ENCODE measurements at regions of chr4 and their contacts with region 1.

Region 1: DNA sequence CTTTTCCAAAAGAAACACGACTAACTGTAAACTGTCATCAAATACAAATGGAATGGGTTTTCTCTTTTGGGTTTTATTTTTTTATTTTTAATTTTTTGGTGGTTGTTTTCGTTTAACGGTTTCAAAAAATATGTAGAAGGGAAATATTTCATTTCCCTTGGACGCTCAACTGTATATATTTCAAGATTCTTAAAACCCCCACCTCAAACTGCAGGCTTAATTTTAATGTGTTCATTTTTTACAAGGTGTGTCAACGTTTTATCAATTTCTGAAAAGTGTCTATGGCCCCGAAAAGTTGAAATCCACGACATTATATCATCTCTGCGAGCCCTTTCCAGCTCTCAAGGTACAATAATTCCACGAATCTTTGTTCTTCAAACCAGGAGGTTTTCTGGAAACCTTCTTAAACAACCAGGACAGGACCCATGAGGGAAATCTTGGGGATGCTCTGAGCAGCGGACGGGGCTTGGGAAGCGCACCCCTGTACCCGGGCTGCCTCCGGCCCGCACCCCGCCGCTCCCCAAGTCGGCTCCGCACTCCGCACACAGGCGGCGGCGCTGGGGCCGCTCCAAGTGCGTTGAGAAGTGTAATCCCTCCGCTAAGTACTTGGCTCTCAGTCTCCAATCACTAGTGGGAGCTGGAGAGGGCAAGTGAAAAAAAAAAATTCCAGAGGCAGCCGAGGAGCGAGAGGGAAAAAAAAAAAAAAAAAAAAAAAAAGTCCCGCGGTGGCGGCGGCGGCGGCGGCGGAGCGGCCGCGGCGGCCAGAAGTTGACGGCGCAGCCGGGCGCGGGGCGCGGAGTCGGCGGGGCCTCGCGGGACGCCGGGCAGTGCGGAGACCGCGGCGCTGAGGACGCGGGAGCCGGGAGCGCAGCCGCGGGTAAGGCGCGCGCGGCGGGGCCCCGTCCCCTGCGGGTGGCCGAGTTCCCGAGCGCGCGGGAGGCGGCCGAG is at the start of gene BMPR1B:
- DNase-seq: peak; percentile 75
- H3K4me3 ChIP-seq: peak within 1 kb of the TSS; percentile 38 to 71 (median 58)
- H3K27ac ChIP-seq: no peak within 1 kb of the TSS
- H3K4me1 ChIP-seq: peaks cover 8% of the 10 kb centered on the region
- H3K27me3 ChIP-seq: no peaks in the 10 kb centered on the region
- CTCF ChIP-seq: peak in 1 of 2 donors; percentile 20
- POLR2A ChIP-seq: no peak
- total RNA-seq, gene BMPR1B: 1.4 and 2.1 TPM in 2 replicates

Region 2: GRCh38 chr4:94428884-94429557 is 328.4 kb before region 1 on chr4:
- CTCF ChIA-PET with region 1: no interaction called
- POLR2A ChIA-PET with region 1: no interaction called
- dilution Hi-C with region 1: no loop called
- intact Hi-C with region 1: no loop called
- DNase-seq: no peak
- H3K4me3 ChIP-seq: no peak overlapping the region
- H3K27ac ChIP-seq: no peak overlapping the region
- H3K4me1 ChIP-seq: no peaks in the 10 kb centered on the region
- H3K27me3 ChIP-seq: no peaks in the 10 kb centered on the region
- CTCF ChIP-seq: no peak
- POLR2A ChIP-seq: no peak

Region 3: GRCh38 chr4:94669672-94670664 is 87.5 kb before region 1 on chr4:
- CTCF ChIA-PET with region 1: no interaction called
- POLR2A ChIA-PET with region 1: no interaction called
- dilution Hi-C with region 1: no loop called
- intact Hi-C with region 1: loop called (anchors 5 kb)
- DNase-seq: peak; percentile 62
- H3K4me3 ChIP-seq: no peak overlapping the region
- H3K27ac ChIP-seq: no peak overlapping the region
- H3K4me1 ChIP-seq: peaks cover 11% of the 10 kb centered on the region
- H3K27me3 ChIP-seq: no peaks in the 10 kb centered on the region
- CTCF ChIP-seq: no peak
- POLR2A ChIP-seq: no peak

Region 4: DNA sequence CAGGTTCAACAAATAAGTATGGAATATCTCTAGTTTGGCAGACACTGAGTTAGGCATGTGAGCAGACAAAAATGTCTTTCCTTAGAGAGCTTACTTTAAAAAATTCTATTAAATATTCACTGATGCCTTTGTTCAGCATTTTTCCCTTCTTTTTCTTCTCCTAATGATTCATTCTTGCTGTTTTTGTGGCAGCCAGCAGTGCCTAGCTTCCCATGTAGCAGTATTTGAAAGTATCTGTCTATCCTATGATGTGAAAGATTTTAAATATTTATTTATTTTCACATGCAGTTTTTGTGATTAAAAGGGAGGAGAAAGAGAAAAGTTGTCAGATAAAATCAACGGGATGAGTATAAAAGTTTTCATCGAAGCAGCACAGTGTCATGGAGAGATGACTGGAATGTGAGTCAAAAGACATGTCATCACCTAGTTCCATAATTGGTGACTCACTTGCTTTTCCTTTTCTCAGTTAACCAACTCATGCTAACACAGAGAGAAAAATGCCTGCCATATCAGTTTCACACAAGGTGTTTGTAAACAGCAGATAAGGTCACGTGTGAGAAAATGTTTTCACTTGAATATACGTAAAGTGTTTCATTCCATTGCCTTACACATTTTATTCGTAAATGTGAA is 70.1 kb after region 1 on chr4:
- CTCF ChIA-PET with region 1: no interaction called
- POLR2A ChIA-PET with region 1: no interaction called
- dilution Hi-C with region 1: no loop called
- intact Hi-C with region 1: loop called (anchors 2 kb)
- DNase-seq: peak; percentile 90
- H3K4me3 ChIP-seq: peak overlapping the region in 1 of 3 experiments; percentile 23
- H3K27ac ChIP-seq: peak overlapping the region; percentile 61
- H3K4me1 ChIP-seq: peaks cover 23% of the 10 kb centered on the region
- H3K27me3 ChIP-seq: no peaks in the 10 kb centered on the region
- CTCF ChIP-seq: no peak
- POLR2A ChIP-seq: no peak

Region 5: DNA sequence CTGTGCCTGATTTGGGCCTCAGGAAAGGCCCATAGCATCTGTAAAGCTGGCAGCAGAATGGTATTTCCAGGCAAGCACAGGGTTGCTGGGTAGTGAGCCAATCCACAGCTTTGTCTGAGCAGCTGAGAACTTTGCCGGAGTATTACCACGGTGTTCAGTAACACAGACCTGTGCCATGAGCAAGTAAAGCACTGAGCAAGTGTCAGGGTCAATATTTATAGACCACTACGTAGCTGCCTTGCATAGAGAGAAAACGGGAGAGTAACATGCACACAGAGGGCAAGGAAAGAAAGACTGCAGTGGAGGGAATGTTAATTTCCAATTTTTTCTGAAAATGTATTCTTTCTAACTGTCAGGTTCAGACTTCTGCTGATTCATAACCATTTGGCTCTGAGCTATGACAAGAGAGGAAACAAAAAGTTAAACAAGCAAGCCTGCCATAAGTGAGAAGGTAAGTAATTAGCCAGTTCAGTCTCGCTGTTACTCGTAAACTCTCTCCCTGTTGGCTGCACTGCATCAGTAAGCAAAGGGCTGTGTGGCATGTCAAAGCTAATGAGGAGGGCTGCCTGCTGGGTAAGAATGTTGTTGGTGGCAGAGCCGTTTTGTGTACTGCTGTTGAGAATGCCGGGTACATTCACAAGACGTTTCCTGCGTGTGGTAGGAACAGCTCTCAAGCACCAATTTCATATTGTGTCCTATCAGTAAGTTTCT is 238.4 kb after region 1 on chr4:
- CTCF ChIA-PET with region 1: no interaction called
- POLR2A ChIA-PET with region 1: no interaction called
- dilution Hi-C with region 1: no loop called
- intact Hi-C with region 1: loop called (anchors 5 kb)
- DNase-seq: peak; percentile 67
- H3K4me3 ChIP-seq: no peak overlapping the region
- H3K27ac ChIP-seq: no peak overlapping the region
- H3K4me1 ChIP-seq: peaks cover 3% of the 10 kb centered on the region
- H3K27me3 ChIP-seq: no peaks in the 10 kb centered on the region
- CTCF ChIP-seq: no peak
- POLR2A ChIP-seq: no peak

Region 6: DNA sequence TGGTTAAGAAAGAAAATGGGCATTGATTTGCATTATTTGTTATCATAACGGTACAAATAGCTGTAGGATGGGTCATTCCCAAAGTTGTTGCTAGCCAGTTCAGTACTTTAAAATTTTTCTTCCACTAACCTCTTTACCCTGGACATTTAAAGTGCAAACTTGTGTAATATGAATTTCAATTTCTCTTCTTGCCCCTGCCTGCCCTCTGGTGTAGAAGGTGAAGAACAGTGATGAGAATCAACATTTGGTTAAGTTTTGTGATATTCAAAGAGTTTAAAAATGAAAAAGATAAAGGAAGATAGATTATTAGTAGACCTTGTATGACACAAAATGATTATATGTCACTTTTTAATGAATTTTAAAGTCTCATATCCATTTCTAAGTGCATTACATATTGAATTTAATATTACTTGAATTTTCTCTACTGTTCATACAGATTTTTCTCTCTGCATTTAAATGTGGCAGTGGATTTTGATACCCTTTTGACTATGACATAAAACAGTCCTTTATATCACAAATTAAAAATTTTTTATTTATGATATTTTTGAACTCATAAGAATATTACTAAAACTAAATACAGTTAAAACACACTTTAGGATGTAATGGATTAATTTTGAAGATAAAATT is 338.0 kb after region 1 on chr4:
- CTCF ChIA-PET with region 1: interaction called, 5 read pairs
- POLR2A ChIA-PET with region 1: no interaction called
- dilution Hi-C with region 1: no loop called
- intact Hi-C with region 1: loop called (anchors 1 kb)
- DNase-seq: peak; percentile 58
- H3K4me3 ChIP-seq: no peak overlapping the region
- H3K27ac ChIP-seq: no peak overlapping the region
- H3K4me1 ChIP-seq: no peaks in the 10 kb centered on the region
- H3K27me3 ChIP-seq: no peaks in the 10 kb centered on the region
- CTCF ChIP-seq: peak; percentile 34 to 35
- POLR2A ChIP-seq: no peak

Region 7: DNA sequence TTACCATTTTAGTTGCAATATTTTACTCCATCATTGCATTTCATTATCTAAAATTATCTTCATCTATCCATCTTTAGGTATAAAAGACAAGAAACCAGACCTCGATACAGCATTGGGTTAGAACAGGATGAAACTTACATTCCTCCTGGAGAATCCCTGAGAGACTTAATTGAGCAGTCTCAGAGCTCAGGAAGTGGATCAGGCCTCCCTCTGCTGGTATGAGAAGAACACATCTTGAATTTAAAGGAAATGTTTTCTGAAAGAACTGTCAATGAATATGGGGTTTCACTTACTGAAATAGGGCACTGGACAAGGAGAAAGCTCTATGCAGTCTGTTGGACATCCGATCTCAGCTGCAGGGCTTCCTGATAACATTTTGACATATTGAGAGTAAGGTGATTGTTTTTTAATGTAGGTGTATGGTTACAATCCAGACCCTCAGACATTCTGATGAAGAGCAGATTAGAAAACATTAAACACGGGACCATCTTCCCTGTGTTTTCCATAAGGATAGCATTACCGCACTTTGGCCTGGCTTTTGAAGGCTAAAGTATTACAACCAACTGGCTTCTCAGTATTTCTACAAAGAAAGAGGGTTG is 367.5 kb after region 1 on chr4:
- CTCF ChIA-PET with region 1: interaction called, 12 read pairs
- POLR2A ChIA-PET with region 1: no interaction called
- dilution Hi-C with region 1: no loop called
- intact Hi-C with region 1: loop called (anchors 10 kb)
- DNase-seq: peak; percentile 68
- H3K4me3 ChIP-seq: no peak overlapping the region
- H3K27ac ChIP-seq: no peak overlapping the region
- H3K4me1 ChIP-seq: peaks cover 14% of the 10 kb centered on the region
- H3K27me3 ChIP-seq: no peaks in the 10 kb centered on the region
- CTCF ChIP-seq: peak; percentile 53 to 55
- POLR2A ChIP-seq: no peak

Region 8: GRCh38 chr4:95289028-95289634 is 531.7 kb after region 1 on chr4:
- CTCF ChIA-PET with region 1: no interaction called
- POLR2A ChIA-PET with region 1: no interaction called
- dilution Hi-C with region 1: no loop called
- intact Hi-C with region 1: no loop called
- DNase-seq: peak; percentile 92
- H3K4me3 ChIP-seq: no peak overlapping the region
- H3K27ac ChIP-seq: peak overlapping the region; percentile 77
- H3K4me1 ChIP-seq: peaks cover 31% of the 10 kb centered on the region
- H3K27me3 ChIP-seq: no peaks in the 10 kb centered on the region
- CTCF ChIP-seq: no peak
- POLR2A ChIP-seq: no peak